ENCODE measurements at regions of chrX and their contacts with region 1.

Region 1: GRCh38 chrX:78747489-78747888 is at the start of gene LPAR4:
- DNase-seq: no peak
- ATAC-seq: no peak
- H3K4me3 ChIP-seq: no peak within 1 kb of the TSS
- H3K27ac ChIP-seq: no peak within 1 kb of the TSS
- H3K4me1 ChIP-seq: no peaks in the 10 kb centered on the region
- H3K27me3 ChIP-seq: no peaks in the 10 kb centered on the region
- CTCF ChIP-seq: no peak
- total RNA-seq, gene LPAR4: not detected

Region 2: GRCh38 chrX:78658845-78659744 is 88.4 kb before region 1 on chrX and contains the start of gene RTL3:
- CTCF ChIA-PET with region 1: no interaction called
- POLR2A ChIA-PET with region 1: no interaction called
- in situ Hi-C with region 1: no loop called
- intact Hi-C with region 1: no loop called
- DNase-seq: no peak
- ATAC-seq: no peak
- H3K4me3 ChIP-seq: no peak within 1 kb of the TSS
- H3K27ac ChIP-seq: no peak within 1 kb of the TSS
- H3K4me1 ChIP-seq: no peaks in the 10 kb centered on the region
- H3K27me3 ChIP-seq: no peaks in the 10 kb centered on the region
- CTCF ChIP-seq: no peak
- total RNA-seq, gene RTL3: not detected

Region 3: GRCh38 chrX:78886550-78886949 is 139.1 kb after region 1 on chrX:
- CTCF ChIA-PET with region 1: no interaction called
- POLR2A ChIA-PET with region 1: interaction called, 12 read pairs
- in situ Hi-C with region 1: no loop called
- intact Hi-C with region 1: no loop called
- DNase-seq: peak; percentile 0
- ATAC-seq: 0 out of 2 replicates have a peak, but pooled peaks have one; percentile 58
- H3K4me3 ChIP-seq: no peak overlapping the region
- H3K27ac ChIP-seq: no peak overlapping the region
- H3K4me1 ChIP-seq: no peaks in the 10 kb centered on the region
- H3K27me3 ChIP-seq: no peaks in the 10 kb centered on the region
- CTCF ChIP-seq: peak; percentile 38; the same call in 1 of the 2 replicates